Activated T-helper 2 cell treated with anti-CD3 and anti-CD28 coated beads, Interferon-gamma antibody, Interleukin-2, Interleukin-4, amounts not matched to agents 10 μg/mL and 5 μg/mL and 100 μg/mL, durations not matched to agents 14 hours and 24 hours and 36 hours (primary cell): ENCODE measurements at regions of chr20 and their contacts with region 1.

Region 1: DNA sequence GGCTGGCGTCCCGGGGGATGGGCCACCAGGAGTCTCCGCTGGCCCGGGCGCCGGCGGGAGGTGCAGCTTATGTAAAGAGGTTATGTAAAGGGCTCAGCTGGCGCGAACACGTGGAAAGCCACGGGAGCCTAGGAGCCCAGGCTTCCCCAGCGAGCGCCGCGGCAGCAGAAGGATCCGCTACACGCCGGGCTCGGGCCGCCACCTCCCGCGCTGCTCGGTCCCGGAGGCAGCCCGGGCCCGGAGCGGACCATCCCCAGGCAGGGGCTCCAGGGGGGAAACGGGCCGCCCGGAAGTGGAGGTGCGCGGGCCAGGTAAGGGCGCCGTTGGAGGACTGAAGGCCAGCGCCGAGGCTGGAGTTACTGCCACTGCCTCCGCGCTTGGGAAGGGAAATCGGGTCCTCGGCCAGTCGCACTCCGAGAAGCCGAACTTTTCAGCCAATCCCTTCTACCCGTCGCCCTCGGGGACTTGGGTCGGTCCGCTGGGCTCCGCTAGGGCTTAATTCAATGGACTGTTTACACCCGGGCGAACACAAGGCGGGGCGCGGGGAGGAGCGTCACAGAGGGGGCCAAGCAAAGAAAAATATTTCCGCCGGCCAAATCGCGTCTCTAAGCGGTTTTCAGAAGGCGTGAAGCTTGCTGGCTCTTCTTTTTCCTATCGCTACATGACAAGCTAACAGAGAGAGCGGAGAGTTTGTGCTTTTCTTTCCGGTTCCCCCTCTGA is 398 bp downstream of the STK35 start:
- DNase-seq: peak; percentile 84
- H3K4me3 Mint-ChIP-seq: peak overlapping the region; percentile 93
- H3K27ac Mint-ChIP-seq: peak overlapping the region; percentile 100
- H3K4me1 Mint-ChIP-seq: peaks cover 36% of the 10 kb centered on the region
- H3K27me3 Mint-ChIP-seq: peaks cover 1% of the 10 kb centered on the region

Region 2: DNA sequence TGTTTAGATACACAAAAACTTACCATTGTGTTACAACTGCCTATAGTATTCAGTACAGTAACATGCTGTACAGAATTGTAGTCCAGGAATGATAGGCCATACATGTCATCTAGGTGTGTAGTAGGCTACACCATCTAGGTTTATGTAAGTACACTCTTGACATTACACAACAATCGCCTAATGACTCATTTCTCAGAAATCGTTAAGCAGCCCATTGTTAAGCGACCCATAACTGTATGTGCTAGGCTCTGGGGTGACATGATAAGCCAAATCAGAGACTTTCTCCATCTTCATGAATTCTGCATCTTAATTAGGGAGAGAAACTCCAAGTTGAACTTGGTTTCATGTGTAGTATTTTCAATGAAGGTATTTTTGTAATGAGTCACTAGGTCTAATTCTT is 16.8 kb after region 1 on chr20:
- intact Hi-C with region 1: loop called (anchors 2 kb)
- DNase-seq: no peak
- H3K4me3 Mint-ChIP-seq: peak overlapping the region; percentile 7
- H3K27ac Mint-ChIP-seq: peak overlapping the region; percentile 77
- H3K4me1 Mint-ChIP-seq: peaks cover 29% of the 10 kb centered on the region
- H3K27me3 Mint-ChIP-seq: no peaks in the 10 kb centered on the region